HepG2 (cell line): ENCODE measurements at regions of chr9 and their contacts with region 1.

Region 1: GRCh38 chr9:97386733-97387503 is 25.0 kb upstream of the TDRD7 start:
- DNase-seq: peak; percentile 75
- ATAC-seq: peak; percentile 67
- H3K4me3 ChIP-seq: peak overlapping the region; percentile 61 to 88 (median 68)
- H3K27ac ChIP-seq: peak overlapping the region; percentile 54
- H3K4me1 ChIP-seq: peaks cover 71% of the 10 kb centered on the region
- H3K27me3 ChIP-seq: no peaks in the 10 kb centered on the region
- CTCF ChIP-seq: peak; percentile 99
- EP300 ChIP-seq: no peak
- POLR2A ChIP-seq: 0 out of 4 replicates have a peak, but pooled peaks of 1 of the 2 experiments have one; percentile 41
- RAD21 ChIP-seq: peak; percentile 90

Region 2: GRCh38 chr9:96854073-96854876 is 532.6 kb before region 1 on chr9 and contains the start of gene ZNF782:
- CTCF ChIA-PET with region 1: no interaction called
- POLR2A ChIA-PET with region 1: interaction called, 13 read pairs
- in situ Hi-C with region 1: loop called (anchors 10 kb)
- intact Hi-C with region 1: loop called (anchors 5 kb)
- DNase-seq: peak; percentile 93
- ATAC-seq: peak; percentile 78
- H3K4me3 ChIP-seq: peak within 1 kb of the TSS; percentile 78 to 84 (median 83)
- H3K27ac ChIP-seq: peak within 1 kb of the TSS; percentile 87
- H3K4me1 ChIP-seq: peaks cover 73% of the 10 kb centered on the region
- H3K27me3 ChIP-seq: no peaks in the 10 kb centered on the region
- CTCF ChIP-seq: peak; percentile 31; the same call in 1 of the 2 replicates
- EP300 ChIP-seq: 0 out of 4 replicates have a peak, but pooled peaks of 1 of the 2 experiments have one; percentile 26
- POLR2A ChIP-seq: peak; percentile 44 to 63; a peak in 3 of 4 replicates
- RAD21 ChIP-seq: peak; percentile 22; the same call in 1 of the 2 replicates
- total RNA-seq, gene ZNF782: 4.7 and 4.9 TPM in 2 replicates

Region 3: DNA sequence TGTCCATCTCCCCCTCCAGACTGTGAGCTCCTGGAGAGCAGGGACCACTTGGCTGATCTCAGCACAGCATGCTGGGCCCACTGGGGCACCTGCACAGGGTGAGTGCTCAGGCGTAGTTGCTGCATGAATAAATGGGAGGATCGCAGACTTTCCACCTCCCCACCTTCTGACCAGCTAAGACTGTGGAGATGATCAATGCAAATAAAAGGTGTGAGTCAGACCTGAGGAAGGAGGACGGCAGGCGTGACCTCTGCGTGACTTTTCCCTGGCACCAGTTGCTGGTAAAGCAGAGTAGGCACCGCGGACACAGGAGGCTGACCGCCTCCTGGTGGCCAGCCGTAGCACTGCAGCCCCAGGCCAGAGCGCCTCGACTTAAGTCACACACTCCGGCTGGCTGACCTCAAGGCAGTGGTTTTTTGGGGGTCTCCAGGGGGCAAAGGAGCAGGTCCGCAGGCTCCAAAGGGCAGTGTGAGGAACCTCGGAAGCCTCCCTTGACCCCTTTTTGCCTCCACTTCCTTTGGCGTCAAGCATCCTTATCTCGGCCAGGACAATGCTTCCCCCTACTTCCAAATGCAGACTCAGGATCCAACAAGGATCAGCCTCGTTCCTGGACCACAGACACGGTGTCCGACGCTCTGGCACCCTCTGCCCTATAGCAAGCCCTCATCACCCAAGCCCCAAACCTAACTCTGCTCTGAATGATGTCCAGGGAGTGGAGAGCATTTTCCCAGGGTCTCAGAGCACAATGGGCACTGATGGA is 12.3 kb after region 1 on chr9:
- CTCF ChIA-PET with region 1: interaction called, 25 read pairs
- POLR2A ChIA-PET with region 1: interaction called, 39 read pairs
- in situ Hi-C with region 1: no loop called
- intact Hi-C with region 1: loop called (anchors 1 kb)
- DNase-seq: peak; percentile 54
- ATAC-seq: peak; percentile 73
- H3K4me3 ChIP-seq: peak overlapping the region in 1 of 3 experiments; percentile 12; a peak in 1 of 6 replicates
- H3K27ac ChIP-seq: no peak overlapping the region
- H3K4me1 ChIP-seq: peaks cover 92% of the 10 kb centered on the region
- H3K27me3 ChIP-seq: no peaks in the 10 kb centered on the region
- CTCF ChIP-seq: peak; percentile 94
- EP300 ChIP-seq: no peak
- POLR2A ChIP-seq: no peak
- RAD21 ChIP-seq: peak; percentile 93

Region 4: GRCh38 chr9:97411789-97412625 is 25.1 kb after region 1 on chr9 and contains the start of gene TDRD7:
- CTCF ChIA-PET with region 1: interaction called, 25 read pairs
- POLR2A ChIA-PET with region 1: interaction called, 32 read pairs
- in situ Hi-C with region 1: no loop called
- intact Hi-C with region 1: loop called (anchors 2 kb)
- DNase-seq: peak; percentile 65
- ATAC-seq: peak; percentile 86
- H3K4me3 ChIP-seq: peak within 1 kb of the TSS; percentile 80 to 86 (median 83)
- H3K27ac ChIP-seq: peak within 1 kb of the TSS; percentile 73
- H3K4me1 ChIP-seq: peaks cover 59% of the 10 kb centered on the region
- H3K27me3 ChIP-seq: no peaks in the 10 kb centered on the region
- CTCF ChIP-seq: peak; percentile 94
- EP300 ChIP-seq: peak in 1 of 2 experiments; percentile 33; a peak in 1 of 4 replicates
- POLR2A ChIP-seq: peak in 1 of 2 experiments; percentile 48; a peak in 1 of 4 replicates
- RAD21 ChIP-seq: peak; percentile 95
- total RNA-seq, gene TDRD7: 15.5 and 21.7 TPM in 2 replicates

Region 5: GRCh38 chr9:97615439-97616072 is 228.6 kb after region 1 on chr9:
- CTCF ChIA-PET with region 1: interaction called, 3 read pairs
- POLR2A ChIA-PET with region 1: no interaction called
- in situ Hi-C with region 1: no loop called
- intact Hi-C with region 1: loop called (anchors 5 kb)
- DNase-seq: peak; percentile 39
- ATAC-seq: peak; percentile 49; the same call in 1 of the 3 replicates
- H3K4me3 ChIP-seq: no peak overlapping the region
- H3K27ac ChIP-seq: no peak overlapping the region
- H3K4me1 ChIP-seq: no peaks in the 10 kb centered on the region
- H3K27me3 ChIP-seq: no peaks in the 10 kb centered on the region
- CTCF ChIP-seq: peak; percentile 82
- EP300 ChIP-seq: no peak
- POLR2A ChIP-seq: no peak
- RAD21 ChIP-seq: peak; percentile 52; the same call in 1 of the 2 replicates